B cell (primary cell): ENCODE measurements at regions of chr1 and their contacts with region 1.

Region 1: GRCh38 chr1:112390775-112391602 is 5.0 kb upstream of the CTTNBP2NL start:
- DNase-seq: peak; percentile 90
- ATAC-seq: peak; percentile 92
- H3K4me3 ChIP-seq: peak overlapping the region in 1 of 5 experiments; percentile 17
- H3K4me3 Mint-ChIP-seq: peak overlapping the region; percentile 13
- H3K27ac ChIP-seq: no peak overlapping the region
- H3K27ac Mint-ChIP-seq: peak overlapping the region; percentile 15
- H3K4me1 ChIP-seq: peaks cover 17 to 21% of the 10 kb centered on the region in 2 donors
- H3K4me1 Mint-ChIP-seq: peaks cover 24% of the 10 kb centered on the region
- H3K27me3 ChIP-seq: peaks cover 0 to 12% (median 0%) of the 10 kb centered on the region in 4 experiments
- H3K27me3 Mint-ChIP-seq: peaks cover 13% of the 10 kb centered on the region
- CTCF ChIP-seq: peak; percentile 96

Region 2: GRCh38 chr1:112369392-112370285 is 21.4 kb before region 1 on chr1:
- CTCF ChIA-PET with region 1: interaction called, 3 read pairs
- POLR2A ChIA-PET with region 1: interaction called, 15 read pairs
- intact Hi-C with region 1: no loop called
- DNase-seq: peak; percentile 84
- ATAC-seq: peak; percentile 100
- H3K4me3 ChIP-seq: no peak overlapping the region
- H3K4me3 Mint-ChIP-seq: no peak overlapping the region
- H3K27ac ChIP-seq: no peak overlapping the region
- H3K27ac Mint-ChIP-seq: no peak overlapping the region
- H3K4me1 ChIP-seq: peaks cover 4% of the 10 kb centered on the region in 2 donors
- H3K4me1 Mint-ChIP-seq: peaks cover 4% of the 10 kb centered on the region
- H3K27me3 ChIP-seq: peaks cover 0 to 34% (median 11%) of the 10 kb centered on the region in 4 experiments
- H3K27me3 Mint-ChIP-seq: peaks cover 50% of the 10 kb centered on the region
- CTCF ChIP-seq: peak; percentile 98

Region 3: GRCh38 chr1:112501810-112502641 is 111.0 kb after region 1 on chr1:
- CTCF ChIA-PET with region 1: interaction called, 31 read pairs
- POLR2A ChIA-PET with region 1: no interaction called
- intact Hi-C with region 1: loop called (anchors 1 kb)
- DNase-seq: peak; percentile 72
- ATAC-seq: peak; percentile 76
- H3K4me3 ChIP-seq: peak overlapping the region in 4 of 5 experiments; percentile 22 to 61 (median 54)
- H3K4me3 Mint-ChIP-seq: peak overlapping the region; percentile 86
- H3K27ac ChIP-seq: no peak overlapping the region
- H3K27ac Mint-ChIP-seq: no peak overlapping the region
- H3K4me1 ChIP-seq: peaks cover 35 to 43% of the 10 kb centered on the region in 2 donors
- H3K4me1 Mint-ChIP-seq: peaks cover 43% of the 10 kb centered on the region
- H3K27me3 ChIP-seq: peaks cover 0 to 69% (median 31%) of the 10 kb centered on the region in 4 experiments
- H3K27me3 Mint-ChIP-seq: peaks cover 68% of the 10 kb centered on the region
- CTCF ChIP-seq: peak; percentile 63

Region 4: GRCh38 chr1:112619520-112620376 is 228.8 kb after region 1 on chr1 and contains the start of gene CAPZA1:
- CTCF ChIA-PET with region 1: interaction called, 87 read pairs
- POLR2A ChIA-PET with region 1: no interaction called
- intact Hi-C with region 1: loop called (anchors 1 kb)
- DNase-seq: peak; percentile 95
- ATAC-seq: peak; percentile 85
- H3K4me3 ChIP-seq: peak within 1 kb of the TSS; percentile 69 to 97 (median 91)
- H3K4me3 Mint-ChIP-seq: peak within 1 kb of the TSS; percentile 97
- H3K27ac ChIP-seq: peak within 1 kb of the TSS; percentile 94 to 99
- H3K27ac Mint-ChIP-seq: peak within 1 kb of the TSS; percentile 99
- H3K4me1 ChIP-seq: peaks cover 37 to 42% of the 10 kb centered on the region in 2 donors
- H3K4me1 Mint-ChIP-seq: peaks cover 46% of the 10 kb centered on the region
- H3K27me3 ChIP-seq: no peaks in the 10 kb centered on the region
- H3K27me3 Mint-ChIP-seq: no peaks in the 10 kb centered on the region
- CTCF ChIP-seq: no peak
- total RNA-seq, gene CAPZA1: 172 and 182 TPM in 2 replicates

Region 5: DNA sequence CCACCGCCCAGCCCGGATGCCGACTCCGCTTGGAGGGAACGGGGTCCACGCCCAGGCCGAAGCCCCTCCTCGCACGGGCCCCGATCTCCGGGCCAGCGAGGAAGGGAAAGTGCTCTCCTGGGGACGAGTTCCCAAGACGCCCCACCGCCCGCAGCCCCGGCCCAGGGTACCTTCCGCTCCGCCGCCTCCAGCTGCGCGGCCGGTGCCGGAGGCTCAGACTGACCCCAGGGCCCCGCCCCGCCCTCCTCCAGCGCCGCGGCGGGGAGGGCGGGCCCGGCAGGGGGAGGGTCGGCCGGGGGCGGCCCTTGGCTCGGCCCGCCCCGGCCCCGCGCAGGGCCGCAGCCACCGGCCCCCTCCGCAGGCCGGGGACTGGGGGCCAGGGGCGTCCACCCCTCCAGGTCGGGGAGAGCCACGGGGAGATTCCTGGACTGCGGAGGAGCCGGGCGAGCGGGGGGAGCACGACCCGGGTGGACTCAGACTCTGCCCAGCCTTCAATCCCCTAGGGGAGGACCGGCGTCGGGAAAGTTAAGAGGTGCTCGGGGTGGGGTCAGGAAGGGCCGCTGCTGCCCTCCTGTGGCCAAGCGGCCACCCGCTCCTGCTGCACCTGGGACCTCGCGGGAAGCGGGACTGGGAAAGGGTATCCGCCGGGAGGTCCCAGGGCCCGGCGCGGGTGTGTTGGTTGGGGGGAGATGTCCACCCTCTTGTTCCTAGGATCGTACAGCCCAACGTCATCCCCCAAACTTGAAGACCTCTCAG is 316.1 kb after region 1 on chr1 and contains the start of gene RHOC:
- CTCF ChIA-PET with region 1: interaction called, 122 read pairs
- POLR2A ChIA-PET with region 1: interaction called, 3 read pairs
- intact Hi-C with region 1: loop called (anchors 1 kb)
- DNase-seq: peak; percentile 81
- ATAC-seq: peak; percentile 85
- H3K4me3 ChIP-seq: peak within 1 kb of the TSS in 4 of 5 experiments; percentile 56 to 74 (median 66)
- H3K4me3 Mint-ChIP-seq: peak within 1 kb of the TSS; percentile 88
- H3K27ac ChIP-seq: peak within 1 kb of the TSS in 1 of 2 donors; percentile 49
- H3K27ac Mint-ChIP-seq: peak within 1 kb of the TSS; percentile 81
- H3K4me1 ChIP-seq: peaks cover 34 to 46% of the 10 kb centered on the region in 2 donors
- H3K4me1 Mint-ChIP-seq: peaks cover 50% of the 10 kb centered on the region
- H3K27me3 ChIP-seq: no peaks in the 10 kb centered on the region
- H3K27me3 Mint-ChIP-seq: no peaks in the 10 kb centered on the region
- CTCF ChIP-seq: peak; percentile 72
- total RNA-seq, gene RHOC: 18.5 and 21.0 TPM in 2 replicates

Region 6: GRCh38 chr1:112809253-112809684 is 418.3 kb after region 1 on chr1:
- CTCF ChIA-PET with region 1: interaction called, 15 read pairs
- POLR2A ChIA-PET with region 1: no interaction called
- intact Hi-C with region 1: loop called (anchors 2 kb)
- DNase-seq: peak; percentile 63
- ATAC-seq: peak; percentile 56
- H3K4me3 ChIP-seq: no peak overlapping the region
- H3K4me3 Mint-ChIP-seq: no peak overlapping the region
- H3K27ac ChIP-seq: no peak overlapping the region
- H3K27ac Mint-ChIP-seq: no peak overlapping the region
- H3K4me1 ChIP-seq: no peaks in the 10 kb centered on the region
- H3K4me1 Mint-ChIP-seq: no peaks in the 10 kb centered on the region
- H3K27me3 ChIP-seq: no peaks in the 10 kb centered on the region
- H3K27me3 Mint-ChIP-seq: peaks cover 27% of the 10 kb centered on the region
- CTCF ChIP-seq: peak; percentile 81

Region 7: DNA sequence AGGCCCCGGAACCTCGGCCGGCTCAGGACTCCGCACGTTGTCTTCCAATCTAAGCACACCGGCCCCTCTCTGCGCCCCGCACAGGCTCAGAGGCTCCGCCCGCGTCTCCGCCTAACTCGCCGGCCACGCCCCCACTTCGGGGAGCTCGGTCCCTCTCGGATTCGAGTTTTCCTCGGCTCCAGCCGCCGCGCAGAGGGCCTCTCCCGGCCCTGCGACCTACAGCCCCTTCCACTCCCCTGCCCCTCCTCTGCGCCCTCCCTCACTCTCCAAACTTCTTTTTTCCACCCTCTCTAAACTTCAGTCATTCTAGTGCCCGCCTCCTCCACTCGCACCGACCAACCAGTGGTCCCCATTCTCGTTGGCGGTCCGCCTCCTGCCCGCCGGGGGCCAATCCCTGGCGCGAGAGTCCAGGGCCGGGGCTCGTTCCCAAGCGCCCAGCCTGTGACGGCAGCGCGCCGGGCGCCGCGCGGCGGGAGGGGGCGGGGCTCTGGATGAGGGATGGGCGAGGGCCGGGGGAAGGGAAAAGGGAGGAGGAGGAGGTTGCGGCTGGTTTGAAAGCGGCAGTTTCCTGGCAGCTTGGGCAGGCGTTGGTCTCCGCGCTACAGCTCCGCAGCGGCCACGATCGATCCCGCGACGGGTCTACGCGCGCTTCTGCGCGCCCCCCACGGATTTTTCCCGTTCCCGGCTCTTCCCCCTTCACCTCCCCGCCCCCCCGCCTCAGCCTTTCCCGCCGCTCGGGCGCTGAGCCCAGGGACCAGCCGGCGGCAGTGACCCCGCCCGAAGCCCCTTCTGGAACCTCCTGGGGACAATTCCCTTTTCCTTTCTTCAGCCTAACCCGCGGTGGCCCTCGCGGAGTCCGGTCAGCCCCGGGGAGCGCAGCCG is 999.2 kb after region 1 on chr1 and contains the start of gene MAGI3:
- CTCF ChIA-PET with region 1: no interaction called
- POLR2A ChIA-PET with region 1: no interaction called
- intact Hi-C with region 1: loop called (anchors 10 kb)
- DNase-seq: peak; percentile 88
- ATAC-seq: peak; percentile 96
- H3K4me3 ChIP-seq: peak within 1 kb of the TSS; percentile 22 to 83 (median 76)
- H3K4me3 Mint-ChIP-seq: peak within 1 kb of the TSS; percentile 89
- H3K27ac ChIP-seq: no peak within 1 kb of the TSS
- H3K27ac Mint-ChIP-seq: peak within 1 kb of the TSS; percentile 42
- H3K4me1 ChIP-seq: peaks cover 16 to 19% of the 10 kb centered on the region in 2 donors
- H3K4me1 Mint-ChIP-seq: peaks cover 21% of the 10 kb centered on the region
- H3K27me3 ChIP-seq: peaks cover 0 to 22% (median 15%) of the 10 kb centered on the region in 4 experiments
- H3K27me3 Mint-ChIP-seq: peaks cover 43% of the 10 kb centered on the region
- CTCF ChIP-seq: no peak
- total RNA-seq, gene MAGI3: 0.67 and 0.83 TPM in 2 replicates